Activated naive CD4-positive, alpha-beta T cell treated with anti-CD3 and anti-CD28 coated beads for 36 hours (primary cell): ENCODE measurements at regions of chr17 and their contacts with region 1.

Region 1: GRCh38 chr17:29664743-29665480 is 42.2 kb upstream of the CORO6 start:
- DNase-seq: peak; percentile 32
- H3K4me3 Mint-ChIP-seq: no peak overlapping the region
- H3K27ac Mint-ChIP-seq: peak overlapping the region; percentile 90
- H3K4me1 Mint-ChIP-seq: peaks cover 54% of the 10 kb centered on the region
- H3K27me3 Mint-ChIP-seq: no peaks in the 10 kb centered on the region

Region 2: DNA sequence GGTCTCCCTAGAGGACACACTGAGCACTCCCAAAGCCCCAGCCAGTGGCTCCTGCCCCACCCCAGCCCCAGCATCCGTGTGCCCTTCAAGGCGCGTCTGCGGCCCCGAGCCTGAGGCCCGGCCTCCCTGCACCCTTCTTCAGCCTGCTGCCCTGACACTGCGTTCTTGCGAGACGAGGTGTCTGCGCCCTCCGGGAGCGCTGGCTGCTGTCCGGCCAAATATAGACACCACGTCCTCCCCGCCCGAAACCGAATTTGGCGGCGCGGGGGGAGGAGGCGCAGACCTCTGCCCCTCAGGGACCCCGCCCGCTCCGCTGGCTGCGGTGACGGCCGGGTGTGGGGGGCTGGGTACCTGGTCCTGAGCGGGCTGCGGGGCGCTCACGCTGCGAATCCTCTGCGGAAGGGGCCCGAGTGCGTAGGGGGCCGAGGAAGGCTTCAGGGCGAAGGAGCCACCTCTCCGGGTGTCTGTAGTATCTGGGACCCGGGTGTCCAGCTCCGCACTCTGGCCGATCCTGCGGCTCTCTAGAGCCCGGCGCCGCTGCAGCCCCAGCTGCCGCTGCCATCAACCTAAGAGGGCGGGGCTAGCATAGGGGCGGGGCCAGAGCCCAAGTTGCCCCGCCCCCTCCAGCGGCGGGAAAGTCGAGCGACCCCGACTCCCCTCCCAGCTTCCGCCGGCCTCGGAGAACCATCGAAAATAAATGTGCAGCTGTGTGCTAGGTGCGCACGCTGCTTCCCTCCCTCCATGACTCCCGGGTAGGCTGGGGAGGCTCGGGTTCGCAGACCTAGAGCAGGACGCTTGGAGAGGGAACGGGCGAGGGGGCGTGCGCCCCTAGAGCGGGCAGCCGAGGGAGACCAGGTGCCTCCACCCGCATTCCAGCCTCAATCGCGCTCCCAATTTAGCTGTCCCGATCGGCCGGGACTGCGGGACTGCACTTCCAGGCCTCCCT is 42.3 kb before region 1 on chr17 and contains the start of gene CORO6:
- CTCF ChIA-PET with region 1: interaction called, 7 read pairs
- intact Hi-C with region 1: loop called (anchors 1 kb)
- DNase-seq: peak; percentile 75
- H3K4me3 Mint-ChIP-seq: peak within 1 kb of the TSS; percentile 79
- H3K27ac Mint-ChIP-seq: peak within 1 kb of the TSS; percentile 96
- H3K4me1 Mint-ChIP-seq: peaks cover 57% of the 10 kb centered on the region
- H3K27me3 Mint-ChIP-seq: no peaks in the 10 kb centered on the region
- total RNA-seq, gene CORO6: 24.8 to 27.3 TPM

Region 3: DNA sequence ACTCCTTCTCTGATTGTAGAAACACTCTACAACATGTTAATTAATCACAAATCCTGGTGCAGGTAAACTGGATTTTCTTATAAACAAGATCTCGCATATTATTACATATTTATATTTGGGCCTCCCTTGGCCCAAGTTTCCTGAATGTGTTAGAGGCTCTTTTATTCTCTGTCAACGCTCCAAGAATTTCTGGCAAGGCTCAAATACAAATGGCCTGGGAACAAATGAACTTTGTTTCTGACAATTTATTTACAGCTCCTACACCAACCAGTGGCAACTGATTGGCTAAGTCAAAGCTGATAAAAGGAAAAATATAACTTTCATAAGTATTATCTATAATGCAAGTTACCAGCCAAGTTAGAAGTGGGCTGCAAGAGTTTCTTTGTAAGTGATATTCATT is 22.7 kb after region 1 on chr17:
- CTCF ChIA-PET with region 1: interaction called, 3 read pairs
- intact Hi-C with region 1: loop called (anchors 1 kb)
- DNase-seq: no peak
- H3K4me3 Mint-ChIP-seq: no peak overlapping the region
- H3K27ac Mint-ChIP-seq: no peak overlapping the region
- H3K4me1 Mint-ChIP-seq: peaks cover 34% of the 10 kb centered on the region
- H3K27me3 Mint-ChIP-seq: no peaks in the 10 kb centered on the region

Region 4: GRCh38 chr17:29705386-29705785 is 40.5 kb after region 1 on chr17:
- CTCF ChIA-PET with region 1: interaction called, 4 read pairs
- intact Hi-C with region 1: loop called (anchors 1 kb)
- DNase-seq: no peak
- H3K4me3 Mint-ChIP-seq: peak overlapping the region; percentile 55
- H3K27ac Mint-ChIP-seq: peak overlapping the region; percentile 96
- H3K4me1 Mint-ChIP-seq: peaks cover 46% of the 10 kb centered on the region
- H3K27me3 Mint-ChIP-seq: no peaks in the 10 kb centered on the region

Region 5: DNA sequence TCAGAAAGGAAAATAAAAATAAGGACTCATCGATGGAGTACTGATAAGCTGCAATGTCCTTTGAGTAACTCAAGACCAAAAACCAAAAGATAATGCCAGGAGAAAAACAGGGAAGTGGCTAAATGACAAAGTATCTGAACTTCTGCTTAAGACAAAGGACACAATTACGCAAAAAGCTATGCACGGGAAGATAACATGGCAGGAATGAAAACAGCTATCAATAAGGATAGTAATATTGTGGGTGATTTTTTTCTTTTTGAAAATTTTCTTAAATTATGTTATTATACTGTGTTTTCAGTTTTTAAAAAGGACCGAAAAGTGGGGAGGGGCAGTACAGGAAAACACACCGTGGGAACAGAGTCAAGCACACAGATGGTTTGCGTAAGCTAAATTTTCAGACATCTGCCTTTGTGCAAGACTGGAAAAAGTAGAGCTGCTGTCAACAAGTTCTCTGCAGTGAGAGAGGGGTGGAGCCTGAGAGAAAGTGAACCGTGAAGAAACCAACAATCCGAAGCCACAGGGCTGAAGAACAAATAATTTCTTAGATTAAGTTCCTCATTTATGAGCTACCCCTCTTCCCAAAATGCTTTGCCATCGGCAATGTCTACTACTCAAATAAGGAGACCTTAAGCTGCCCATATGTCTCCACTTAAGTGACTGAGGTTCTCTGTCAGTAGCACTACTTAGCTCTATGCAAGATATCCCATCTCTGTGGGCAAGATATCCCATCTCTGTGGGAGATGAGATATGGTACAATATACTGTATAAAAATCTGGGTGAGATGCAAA is 57.7 kb after region 1 on chr17:
- CTCF ChIA-PET with region 1: interaction called, 3 read pairs
- intact Hi-C with region 1: loop called (anchors 1 kb)
- DNase-seq: peak; percentile 58
- H3K4me3 Mint-ChIP-seq: peak overlapping the region; percentile 55
- H3K27ac Mint-ChIP-seq: peak overlapping the region; percentile 80
- H3K4me1 Mint-ChIP-seq: peaks cover 83% of the 10 kb centered on the region
- H3K27me3 Mint-ChIP-seq: no peaks in the 10 kb centered on the region

Region 6: DNA sequence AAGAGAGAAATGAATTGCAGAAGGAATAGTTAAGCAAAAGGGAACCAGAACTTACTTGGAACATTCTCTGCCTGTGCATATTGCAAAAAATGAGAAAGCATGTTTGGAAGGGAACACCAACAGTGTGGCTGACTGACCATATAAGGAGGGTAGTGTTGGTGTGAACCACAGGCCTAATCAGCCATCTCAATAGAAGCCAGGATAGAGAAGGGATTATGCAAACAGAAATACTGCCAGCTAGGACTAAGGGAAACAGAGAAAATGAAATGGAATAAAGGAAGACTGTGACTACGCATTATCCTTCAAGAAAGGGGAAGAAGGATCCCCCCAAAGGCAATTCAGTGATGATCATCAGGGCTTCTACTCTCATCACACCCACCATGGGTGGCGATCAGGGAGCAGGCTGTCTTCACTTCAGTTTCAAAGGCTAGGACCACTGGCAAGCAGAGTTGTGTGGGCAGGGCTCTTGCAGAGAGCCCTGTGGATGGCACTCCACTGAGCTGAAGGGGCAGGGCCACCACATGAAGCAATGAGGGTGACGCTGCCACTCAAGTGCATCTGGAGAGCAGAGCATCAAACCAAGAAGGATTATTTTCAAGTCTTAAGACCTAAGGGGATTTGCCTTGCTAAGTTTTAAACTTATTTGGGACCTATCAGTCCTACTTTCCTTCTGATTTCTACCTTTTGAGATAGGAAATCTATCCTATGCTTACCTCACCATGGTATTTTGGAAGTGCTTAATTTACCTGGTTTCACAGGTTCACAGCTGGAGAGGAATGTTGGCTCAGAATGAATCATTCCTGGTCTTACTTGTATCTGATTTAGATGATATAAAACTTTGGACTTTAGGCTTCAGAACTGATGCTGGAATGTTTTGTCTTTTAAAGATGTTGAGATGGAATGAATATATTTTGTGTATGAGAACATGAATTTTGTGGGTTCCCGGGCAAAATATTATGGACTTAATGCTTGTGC is 124.6 kb after region 1 on chr17:
- CTCF ChIA-PET with region 1: no interaction called
- intact Hi-C with region 1: no loop called
- DNase-seq: no peak
- H3K4me3 Mint-ChIP-seq: no peak overlapping the region
- H3K27ac Mint-ChIP-seq: no peak overlapping the region
- H3K4me1 Mint-ChIP-seq: peaks cover 4% of the 10 kb centered on the region
- H3K27me3 Mint-ChIP-seq: no peaks in the 10 kb centered on the region